ENCODE measurements at regions of chr10 and their contacts with region 1.

Region 1: GRCh38 chr10:112565434-112566053 is 118.5 kb downstream of the VTI1A start:
- DNase-seq: peak; percentile 69
- ATAC-seq: peak; percentile 89
- H3K4me3 ChIP-seq: no peak overlapping the region
- H3K27ac ChIP-seq: no peak overlapping the region
- H3K4me1 ChIP-seq: peaks cover 14% of the 10 kb centered on the region; the same call in 1 of the 2 replicates
- H3K27me3 ChIP-seq: no peaks in the 10 kb centered on the region
- CTCF ChIP-seq: peak; percentile 85; the same call in 1 of the 2 replicates

Region 2: DNA sequence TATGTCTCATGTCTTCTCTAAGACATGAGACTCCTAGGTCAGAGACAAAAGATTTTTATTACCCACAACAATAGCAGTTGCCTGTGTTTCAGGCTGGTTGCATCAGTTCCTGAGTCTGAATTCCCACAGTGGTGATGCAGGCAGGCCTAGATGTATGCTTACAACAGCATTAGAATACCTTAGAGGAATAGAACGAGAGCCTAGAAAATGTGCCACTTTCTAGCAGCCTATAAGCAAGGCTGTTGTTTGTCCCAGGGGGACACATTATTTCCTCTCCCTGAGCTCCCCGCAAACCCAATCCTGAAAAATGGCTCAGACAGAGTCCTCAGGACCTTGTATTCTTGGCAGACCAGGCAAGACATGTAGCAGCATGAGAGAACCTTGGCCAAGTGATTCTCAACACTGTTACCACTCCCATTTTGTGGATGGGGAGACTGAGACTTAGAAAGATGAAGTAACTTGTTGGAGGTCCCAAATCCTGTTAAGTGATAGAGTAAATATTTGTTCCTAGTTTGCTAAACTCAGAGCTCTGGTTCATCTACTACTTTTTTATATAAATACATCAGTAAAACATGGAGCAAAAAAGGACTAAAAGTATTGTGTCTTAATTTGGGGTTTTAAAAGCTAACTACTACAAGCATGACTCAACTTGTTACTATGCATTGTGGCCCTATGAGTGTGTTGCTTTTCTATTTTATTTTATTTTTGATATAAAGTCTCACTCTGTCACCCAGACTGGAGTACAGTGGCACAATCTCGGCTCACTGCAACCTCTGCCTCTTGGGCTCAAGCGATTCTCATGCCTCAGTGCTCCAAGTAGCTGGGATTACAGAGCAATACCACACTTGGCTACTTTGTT is 104.3 kb before region 1 on chr10:
- CTCF ChIA-PET with region 1: no interaction called
- POLR2A ChIA-PET with region 1: no interaction called
- in situ Hi-C with region 1: no loop called
- intact Hi-C with region 1: no loop called
- DNase-seq: peak; percentile 86
- ATAC-seq: no peak
- H3K4me3 ChIP-seq: no peak overlapping the region
- H3K27ac ChIP-seq: peak overlapping the region; percentile 70; the same call in 1 of the 2 replicates
- H3K4me1 ChIP-seq: no peaks in the 10 kb centered on the region
- H3K27me3 ChIP-seq: no peaks in the 10 kb centered on the region
- CTCF ChIP-seq: no peak

Region 3: GRCh38 chr10:112639298-112639697 is 73.8 kb after region 1 on chr10:
- CTCF ChIA-PET with region 1: no interaction called
- POLR2A ChIA-PET with region 1: no interaction called
- in situ Hi-C with region 1: no loop called
- intact Hi-C with region 1: no loop called
- DNase-seq: no peak
- ATAC-seq: no peak
- H3K4me3 ChIP-seq: no peak overlapping the region
- H3K27ac ChIP-seq: no peak overlapping the region
- H3K4me1 ChIP-seq: 0 out of 2 replicates have a peak, but pooled peaks cover 3% of the 10 kb centered on the region
- H3K27me3 ChIP-seq: no peaks in the 10 kb centered on the region
- CTCF ChIP-seq: no peak

Region 4: GRCh38 chr10:112775381-112775780 is 209.8 kb after region 1 on chr10:
- CTCF ChIA-PET with region 1: no interaction called
- POLR2A ChIA-PET with region 1: no interaction called
- in situ Hi-C with region 1: no loop called
- intact Hi-C with region 1: loop called (anchors 10 kb)
- DNase-seq: no peak
- ATAC-seq: no peak
- H3K4me3 ChIP-seq: no peak overlapping the region
- H3K27ac ChIP-seq: peak overlapping the region; percentile 62
- H3K4me1 ChIP-seq: peaks cover 41% of the 10 kb centered on the region
- H3K27me3 ChIP-seq: no peaks in the 10 kb centered on the region
- CTCF ChIP-seq: peak; percentile 36; the same call in 1 of the 2 replicates

Region 5: GRCh38 chr10:113126229-113127201 is 561.0 kb after region 1 on chr10:
- CTCF ChIA-PET with region 1: interaction called, 3 read pairs
- POLR2A ChIA-PET with region 1: no interaction called
- in situ Hi-C with region 1: no loop called
- intact Hi-C with region 1: loop called (anchors 10 kb)
- DNase-seq: peak; percentile 25
- ATAC-seq: peak; percentile 100
- H3K4me3 ChIP-seq: peak overlapping the region; percentile 23 to 51
- H3K27ac ChIP-seq: peak overlapping the region; percentile 83
- H3K4me1 ChIP-seq: peaks cover 48% of the 10 kb centered on the region
- H3K27me3 ChIP-seq: no peaks in the 10 kb centered on the region
- CTCF ChIP-seq: peak; percentile 99